ENCODE measurements at regions of chr21 and their contacts with region 1.

Region 1: GRCh38 chr21:36539434-36540150 is 59.7 kb upstream of the CLDN14 start:
- DNase-seq: no peak
- H3K4me3 ChIP-seq: no peak overlapping the region
- H3K27ac ChIP-seq: no peak overlapping the region
- H3K4me1 ChIP-seq: no peaks in the 10 kb centered on the region
- H3K27me3 ChIP-seq: no peaks in the 10 kb centered on the region
- CTCF ChIP-seq: no peak

Region 2: DNA sequence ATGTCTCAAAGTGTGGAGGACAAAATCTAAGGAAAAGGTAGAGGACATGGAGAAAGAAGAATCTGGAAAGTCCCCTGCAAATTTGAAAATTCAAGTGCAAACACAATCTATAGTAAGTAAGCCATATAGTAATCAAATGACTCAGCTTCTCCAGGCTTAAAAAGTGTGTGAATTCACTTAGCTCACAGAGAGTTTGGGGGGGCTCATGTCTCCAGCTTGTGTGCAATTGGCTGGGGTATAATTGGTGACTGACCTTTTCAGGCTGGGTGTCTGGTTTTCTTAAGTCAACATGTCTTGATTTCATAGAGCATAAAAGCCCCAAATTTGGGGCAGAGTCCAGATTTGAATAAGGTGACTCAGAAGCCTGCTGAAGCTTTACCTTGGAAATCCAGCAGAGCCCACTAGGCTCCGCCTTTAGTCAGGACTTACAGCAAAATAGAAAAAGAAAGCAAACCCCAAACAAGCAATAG is 68.3 kb before region 1 on chr21:
- CTCF ChIA-PET with region 1: no interaction called
- POLR2A ChIA-PET with region 1: interaction called, 14 read pairs
- intact Hi-C with region 1: no loop called
- DNase-seq: peak; percentile 11 to 79
- H3K4me3 ChIP-seq: no peak overlapping the region
- H3K27ac ChIP-seq: peak overlapping the region; percentile 67
- H3K4me1 ChIP-seq: peaks cover 19% of the 10 kb centered on the region
- H3K27me3 ChIP-seq: no peaks in the 10 kb centered on the region
- CTCF ChIP-seq: no peak

Region 3: GRCh38 chr21:36567216-36567885 is 27.8 kb after region 1 on chr21:
- CTCF ChIA-PET with region 1: no interaction called
- POLR2A ChIA-PET with region 1: no interaction called
- intact Hi-C with region 1: no loop called
- DNase-seq: no peak
- H3K4me3 ChIP-seq: no peak overlapping the region
- H3K27ac ChIP-seq: no peak overlapping the region
- H3K4me1 ChIP-seq: no peaks in the 10 kb centered on the region
- H3K27me3 ChIP-seq: no peaks in the 10 kb centered on the region
- CTCF ChIP-seq: no peak

Region 4: DNA sequence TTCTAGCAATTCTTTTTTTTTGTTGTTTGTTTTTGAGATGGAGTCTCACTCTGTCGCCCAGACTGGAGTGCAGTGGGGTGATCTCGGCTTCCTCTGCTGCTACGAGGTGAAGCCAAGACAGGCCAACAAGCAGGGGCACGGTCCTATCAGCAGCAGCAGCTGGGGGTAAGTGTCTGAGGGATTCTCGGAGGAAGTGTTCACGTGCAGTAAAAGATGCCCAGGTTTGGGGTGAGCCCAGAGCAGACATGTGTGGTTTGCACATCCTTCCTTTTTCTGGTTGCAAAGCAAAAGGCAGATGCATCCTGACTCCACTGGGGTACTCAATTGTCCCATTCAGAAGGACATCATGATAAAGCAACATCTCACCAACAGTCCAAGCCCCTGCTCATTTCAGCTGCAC is 505.6 kb after region 1 on chr21:
- CTCF ChIA-PET with region 1: no interaction called
- POLR2A ChIA-PET with region 1: no interaction called
- intact Hi-C with region 1: no loop called
- DNase-seq: no peak
- H3K4me3 ChIP-seq: no peak overlapping the region
- H3K27ac ChIP-seq: no peak overlapping the region
- H3K4me1 ChIP-seq: peaks cover 20% of the 10 kb centered on the region
- H3K27me3 ChIP-seq: no peaks in the 10 kb centered on the region
- CTCF ChIP-seq: no peak

Measured in PC-9 (cell line).